GM23248 (cell line): ENCODE measurements at regions of chr4 and their contacts with region 1.

Region 1: DNA sequence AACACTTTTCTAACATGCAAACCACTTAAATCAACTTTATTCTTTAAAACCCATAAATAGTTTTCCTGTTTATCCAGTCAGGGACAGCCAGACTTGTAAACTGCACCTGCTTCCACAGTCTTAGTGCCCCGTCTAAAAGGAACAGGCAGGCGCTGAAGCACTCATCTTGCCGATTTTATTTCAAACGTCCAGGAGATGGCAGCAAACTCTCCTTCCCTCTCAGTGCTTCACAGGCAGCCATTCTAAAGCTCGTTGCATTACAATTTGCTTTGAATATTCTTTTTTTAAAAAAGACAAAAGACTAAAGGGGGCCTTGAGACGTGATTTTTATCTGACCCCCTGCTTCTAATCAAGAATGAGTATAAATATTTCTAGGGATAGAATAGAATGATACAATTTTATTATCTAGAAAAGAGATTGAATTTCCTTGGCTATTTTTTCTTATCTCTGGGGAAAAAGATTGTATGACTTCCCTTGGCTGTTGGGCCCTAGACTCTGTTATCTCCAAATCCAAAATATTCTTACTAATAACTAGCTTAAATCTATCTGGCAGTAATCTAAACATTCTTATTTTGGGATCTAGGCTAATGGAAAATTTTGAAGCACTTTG is 93.6 kb upstream of the MYOZ2 start:
- DNase-seq: peak; percentile 82
- H3K4me3 ChIP-seq: 0 out of 2 replicates have a peak overlapping the region, but pooled peaks have one; percentile 20
- H3K27ac ChIP-seq: peak overlapping the region; percentile 86; the same call in 1 of the 2 replicates
- H3K4me1 ChIP-seq: peaks cover 62% of the 10 kb centered on the region
- H3K27me3 ChIP-seq: no peaks in the 10 kb centered on the region

Region 2: GRCh38 chr4:118941149-118941548 is 100.9 kb before region 1 on chr4:
- in situ Hi-C with region 1: loop called (anchors 25 kb)
- DNase-seq: peak; percentile 51
- H3K4me3 ChIP-seq: no peak overlapping the region
- H3K27ac ChIP-seq: no peak overlapping the region
- H3K4me1 ChIP-seq: peaks cover 7% of the 10 kb centered on the region
- H3K27me3 ChIP-seq: no peaks in the 10 kb centered on the region

Region 3: GRCh38 chr4:118968005-118968404 is 74.1 kb before region 1 on chr4:
- in situ Hi-C with region 1: no loop called
- DNase-seq: peak; percentile 75
- H3K4me3 ChIP-seq: peak overlapping the region; percentile 29; the same call in 1 of the 2 replicates
- H3K27ac ChIP-seq: peak overlapping the region; percentile 52
- H3K4me1 ChIP-seq: peaks cover 30% of the 10 kb centered on the region
- H3K27me3 ChIP-seq: no peaks in the 10 kb centered on the region